ENCODE measurements at regions of chr2 and their contacts with region 1.

Region 1: DNA sequence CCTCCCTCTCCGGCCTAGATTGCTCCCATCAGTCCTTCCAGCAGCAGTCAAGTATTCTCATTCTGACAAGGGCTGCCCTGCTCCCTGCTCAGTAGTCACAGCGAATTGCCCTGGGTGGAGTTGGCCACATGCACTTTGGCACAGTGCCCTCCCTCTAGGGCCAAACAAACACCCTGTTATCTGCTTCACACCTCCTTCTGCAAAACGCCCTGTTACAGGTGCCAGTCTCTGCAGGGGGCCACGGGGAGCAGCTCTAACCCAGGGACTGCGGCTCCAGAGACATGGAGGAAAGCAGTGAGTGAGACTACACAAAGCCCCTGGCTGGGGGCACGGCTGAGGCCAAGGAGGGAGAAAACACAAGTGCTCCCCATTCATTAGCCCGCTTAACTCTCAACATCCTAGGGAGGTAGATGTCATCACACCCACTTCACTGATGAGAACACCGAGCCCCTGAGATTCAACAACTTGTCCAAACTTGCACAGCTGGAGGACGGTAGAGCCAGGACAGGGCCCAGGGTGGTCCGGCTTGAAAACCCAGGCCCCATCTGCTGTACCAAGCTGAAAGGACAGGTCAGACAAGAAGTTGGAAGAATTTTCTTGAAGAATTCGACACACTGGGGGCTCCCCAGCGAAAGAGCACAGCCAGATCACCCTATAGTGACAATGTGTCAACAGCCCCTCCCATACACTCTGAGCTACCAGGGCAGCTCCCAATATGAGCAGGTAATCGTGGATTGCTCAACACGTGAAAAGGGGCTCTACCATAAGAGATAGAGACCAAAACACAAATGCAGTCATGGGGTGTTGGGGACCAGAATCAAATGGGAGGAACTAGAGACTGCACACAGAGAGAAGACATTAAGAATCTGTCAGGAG is 8.7 kb upstream of the TFCP2L1 start:
- DNase-seq: no peak
- ATAC-seq: no peak
- H3K4me3 ChIP-seq: no peak overlapping the region
- H3K27ac ChIP-seq: no peak overlapping the region
- H3K4me1 ChIP-seq: no peaks in the 10 kb centered on the region
- H3K27me3 ChIP-seq: no peaks in the 10 kb centered on the region
- CTCF ChIP-seq: no peak

Region 2: DNA sequence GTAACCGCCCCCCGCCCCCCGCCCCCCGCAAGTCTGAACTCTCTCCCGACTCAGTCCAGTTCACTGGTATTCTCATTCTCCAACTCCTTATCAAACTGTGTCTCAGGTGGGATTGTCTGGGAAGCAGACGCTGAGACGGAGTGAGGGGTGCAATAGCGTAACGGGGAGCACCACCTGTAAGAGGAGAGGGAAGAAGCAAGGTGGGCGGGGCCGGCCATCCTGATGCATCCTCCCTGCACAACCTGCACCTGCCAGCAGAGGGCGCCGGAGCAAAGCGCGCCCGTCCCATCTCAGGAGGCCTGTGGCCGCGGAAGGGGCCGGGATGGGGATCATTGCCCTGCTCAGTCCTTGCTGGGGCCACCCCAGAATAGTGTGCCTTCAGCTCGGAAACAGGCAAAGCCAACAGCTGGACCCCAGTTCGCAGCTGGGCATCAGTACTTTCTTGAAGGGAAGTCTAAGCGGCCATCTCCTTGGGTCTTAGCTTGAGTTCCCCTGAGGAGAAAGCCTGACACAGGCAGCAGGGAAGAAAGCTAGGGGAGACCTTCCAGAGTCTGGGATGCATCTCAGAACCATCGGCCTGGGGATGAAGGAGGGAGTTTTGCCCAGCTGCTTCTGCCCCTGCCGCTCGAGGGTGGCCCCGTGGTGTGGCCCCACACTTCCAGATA is 216.7 kb before region 1 on chr2:
- CTCF ChIA-PET with region 1: no interaction called
- POLR2A ChIA-PET with region 1: interaction called, 12 read pairs
- in situ Hi-C with region 1: no loop called
- intact Hi-C with region 1: no loop called
- DNase-seq: no peak
- ATAC-seq: peak; percentile 59
- H3K4me3 ChIP-seq: no peak overlapping the region
- H3K27ac ChIP-seq: no peak overlapping the region
- H3K4me1 ChIP-seq: peaks cover 13% of the 10 kb centered on the region
- H3K27me3 ChIP-seq: no peaks in the 10 kb centered on the region
- CTCF ChIP-seq: peak; percentile 99

Region 3: GRCh38 chr2:121471532-121472469 is 178.1 kb after region 1 on chr2:
- CTCF ChIA-PET with region 1: no interaction called
- POLR2A ChIA-PET with region 1: no interaction called
- in situ Hi-C with region 1: no loop called
- intact Hi-C with region 1: no loop called
- DNase-seq: no peak
- ATAC-seq: no peak
- H3K4me3 ChIP-seq: no peak overlapping the region
- H3K27ac ChIP-seq: no peak overlapping the region
- H3K4me1 ChIP-seq: no peaks in the 10 kb centered on the region
- H3K27me3 ChIP-seq: no peaks in the 10 kb centered on the region
- CTCF ChIP-seq: no peak

Region 4: GRCh38 chr2:121665504-121665903 is 371.8 kb after region 1 on chr2:
- CTCF ChIA-PET with region 1: no interaction called
- POLR2A ChIA-PET with region 1: no interaction called
- in situ Hi-C with region 1: no loop called
- intact Hi-C with region 1: no loop called
- DNase-seq: no peak
- ATAC-seq: no peak
- H3K4me3 ChIP-seq: no peak overlapping the region
- H3K27ac ChIP-seq: no peak overlapping the region
- H3K4me1 ChIP-seq: no peaks in the 10 kb centered on the region
- H3K27me3 ChIP-seq: no peaks in the 10 kb centered on the region
- CTCF ChIP-seq: no peak